ENCODE measurements at regions of chr1 and their contacts with region 1.

Region 1: GRCh38 chr1:165597883-165598675 is 33.0 kb upstream of the MGST3 start:
- DNase-seq: peak; percentile 92 to 95
- ATAC-seq: peak; percentile 94 to 98
- H3K4me3 ChIP-seq: peak overlapping the region; percentile 57 to 72 (median 64)
- H3K27ac ChIP-seq: peak overlapping the region; percentile 20 to 71 (median 54)
- H3K4me1 ChIP-seq: peaks cover 12 to 14% of the 10 kb centered on the region in 2 donors
- H3K27me3 ChIP-seq: no peaks in the 10 kb centered on the region
- CTCF ChIP-seq: no peak
- POLR2A ChIP-seq: no peak

Region 2: GRCh38 chr1:165257969-165258459 is 340.1 kb before region 1 on chr1:
- in situ Hi-C with region 1: loop called in 1 of 4 experiments (anchors 25 kb)
- intact Hi-C with region 1: no loop called
- DNase-seq: peak; percentile 56 to 75
- ATAC-seq: peak; percentile 84 to 91
- H3K4me3 ChIP-seq: no peak overlapping the region
- H3K27ac ChIP-seq: no peak overlapping the region
- H3K4me1 ChIP-seq: peaks cover 0 to 9% of the 10 kb centered on the region in 2 donors
- H3K27me3 ChIP-seq: no peaks in the 10 kb centered on the region
- CTCF ChIP-seq: peak; percentile 35 to 83 (median 77)
- POLR2A ChIP-seq: no peak

Region 3: GRCh38 chr1:165403835-165404482 is 194.1 kb before region 1 on chr1:
- in situ Hi-C with region 1: loop called in 2 of 4 experiments (anchors 5 kb)
- intact Hi-C with region 1: loop called (anchors 1 kb)
- DNase-seq: peak in 1 of 2 donors; percentile 28
- ATAC-seq: peak; percentile 46 to 51
- H3K4me3 ChIP-seq: no peak overlapping the region
- H3K27ac ChIP-seq: no peak overlapping the region
- H3K4me1 ChIP-seq: peaks cover 0 to 13% of the 10 kb centered on the region in 2 donors
- H3K27me3 ChIP-seq: no peaks in the 10 kb centered on the region
- CTCF ChIP-seq: peak; percentile 63 to 80 (median 76)
- POLR2A ChIP-seq: no peak

Region 4: DNA sequence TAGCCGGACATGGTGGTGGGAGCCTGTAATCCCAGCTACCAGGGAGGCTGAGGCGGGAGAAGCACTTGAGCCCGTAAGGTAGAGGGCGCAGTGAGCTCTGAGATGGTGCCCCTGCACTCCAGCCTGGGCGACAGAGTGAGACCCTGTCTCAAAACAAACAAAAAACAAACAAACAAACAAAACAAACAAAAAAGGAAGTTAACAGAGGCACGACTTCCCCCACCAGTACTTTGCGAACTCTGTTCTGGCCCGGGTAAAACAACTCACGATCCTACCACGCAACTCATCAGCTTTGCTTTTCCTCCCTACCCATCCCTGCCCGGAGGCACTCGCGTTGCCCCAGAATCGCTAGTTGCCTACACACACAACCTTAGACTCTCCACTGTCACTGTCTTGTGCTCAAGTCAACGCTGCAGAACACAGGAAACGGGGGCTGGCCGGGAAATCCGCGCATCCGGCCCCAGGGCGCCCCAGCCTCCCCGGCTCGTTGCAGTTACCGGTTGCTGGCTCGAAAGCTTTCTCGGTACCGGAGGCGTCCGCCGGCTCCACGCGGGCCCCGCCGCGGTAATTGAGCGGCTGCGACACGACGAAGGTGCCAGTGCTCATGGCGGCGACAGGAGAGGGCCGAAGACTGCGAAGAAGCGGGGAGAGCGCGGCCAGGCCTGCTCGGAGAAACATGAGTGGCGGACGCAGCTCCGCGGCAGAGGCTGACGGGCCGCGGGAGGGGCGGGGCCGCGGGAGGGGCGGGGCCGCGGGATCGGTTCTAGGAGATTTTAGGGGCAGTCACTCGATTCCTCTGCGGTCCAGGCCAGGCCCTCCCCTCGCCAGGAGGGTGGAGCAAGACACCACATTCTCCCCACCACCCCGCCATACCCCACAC is 100.0 kb after region 1 on chr1 and contains the start of gene ALDH9A1:
- in situ Hi-C with region 1: loop called in 1 of 4 experiments (anchors 10 kb)
- intact Hi-C with region 1: loop called (anchors 2 kb)
- DNase-seq: peak; percentile 68 to 87
- ATAC-seq: peak; percentile 90 to 92
- H3K4me3 ChIP-seq: peak within 1 kb of the TSS; percentile 91 to 96 (median 94)
- H3K27ac ChIP-seq: peak within 1 kb of the TSS; percentile 97 to 98 (median 98)
- H3K4me1 ChIP-seq: peaks cover 18 to 27% of the 10 kb centered on the region in 2 donors
- H3K27me3 ChIP-seq: no peaks in the 10 kb centered on the region
- CTCF ChIP-seq: peak in 2 of 5 experiments; percentile 49 to 52
- POLR2A ChIP-seq: peak; percentile 75 to 90
- total RNA-seq, gene ALDH9A1: 46.4 to 91.5 (median 63.3) TPM

Region 5: GRCh38 chr1:165768513-165769394 is 170.7 kb after region 1 on chr1 and contains the start of gene TMCO1:
- in situ Hi-C with region 1: loop called in 1 of 4 experiments (anchors 10 kb)
- intact Hi-C with region 1: loop called (anchors 2 kb)
- DNase-seq: peak; percentile 96 to 97
- ATAC-seq: peak; percentile 100
- H3K4me3 ChIP-seq: peak within 1 kb of the TSS; percentile 60 to 95 (median 86)
- H3K27ac ChIP-seq: peak within 1 kb of the TSS; percentile 86 to 90 (median 86)
- H3K4me1 ChIP-seq: peaks cover 23 to 33% of the 10 kb centered on the region in 2 donors
- H3K27me3 ChIP-seq: no peaks in the 10 kb centered on the region
- CTCF ChIP-seq: peak; percentile 22 to 34 (median 33)
- POLR2A ChIP-seq: peak; percentile 57 to 68
- total RNA-seq, gene TMCO1: 28.7 to 46.9 (median 36.8) TPM

Region 6: DNA sequence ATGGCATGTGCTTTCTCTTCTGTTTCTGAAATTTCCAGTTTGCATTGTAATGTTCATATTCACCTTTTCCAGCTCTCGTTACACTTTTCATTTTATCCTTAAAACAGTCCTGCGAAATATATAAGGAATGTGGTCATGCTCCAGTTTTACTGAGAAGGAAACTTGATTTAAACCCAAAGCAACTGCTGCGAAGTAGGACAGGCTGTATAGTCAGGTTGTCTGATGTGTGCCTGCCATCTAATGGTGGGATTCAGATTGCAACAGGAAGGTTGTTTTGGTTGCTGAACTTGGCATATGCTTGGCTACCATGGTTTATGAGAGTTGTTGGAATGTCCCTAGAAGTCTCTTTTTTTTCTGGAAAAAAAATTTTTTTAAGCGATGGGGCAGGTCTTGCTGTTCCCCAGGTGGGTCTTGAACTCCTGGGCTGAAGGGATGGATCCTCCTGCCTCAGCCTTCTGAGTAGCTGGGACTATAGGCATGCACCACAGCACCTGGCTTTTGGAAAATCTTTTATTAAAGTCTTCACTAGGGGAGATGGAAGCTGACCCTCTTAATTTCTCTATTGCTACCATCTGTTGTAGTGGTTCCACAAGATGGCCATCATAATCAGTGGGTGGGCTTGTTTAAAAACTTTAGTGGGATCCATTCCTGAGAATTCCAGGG is 316.2 kb after region 1 on chr1:
- in situ Hi-C with region 1: loop called (anchors 5 kb)
- intact Hi-C with region 1: loop called (anchors 1 kb)
- DNase-seq: peak; percentile 31 to 57
- ATAC-seq: peak; percentile 87 to 92
- H3K4me3 ChIP-seq: no peak overlapping the region
- H3K27ac ChIP-seq: no peak overlapping the region
- H3K4me1 ChIP-seq: peaks cover 0 to 15% of the 10 kb centered on the region in 2 donors
- H3K27me3 ChIP-seq: no peaks in the 10 kb centered on the region
- CTCF ChIP-seq: peak; percentile 82 to 92 (median 89)
- POLR2A ChIP-seq: no peak

Measured in gastrocnemius medialis (tissue), 4 donors.